ENCODE measurements at regions of chr9 and their contacts with region 1.

Region 1: GRCh38 chr9:111896353-111896958 is at the start of gene UGCG:
- DNase-seq: peak; percentile 69 to 75 (median 72)
- H3K4me3 ChIP-seq: peak within 1 kb of the TSS; percentile 58 to 90 (median 90)
- H3K4me3 Mint-ChIP-seq: peak within 1 kb of the TSS; percentile 92 to 96
- H3K27ac ChIP-seq: peak within 1 kb of the TSS; percentile 59 to 77
- H3K27ac Mint-ChIP-seq: peak within 1 kb of the TSS; percentile 35 to 85 (median 68)
- H3K4me1 ChIP-seq: peaks cover 22 to 29% of the 10 kb centered on the region in 2 donors
- H3K4me1 Mint-ChIP-seq: peaks cover 11% of the 10 kb centered on the region
- H3K27me3 ChIP-seq: peaks cover 0 to 10% of the 10 kb centered on the region in 2 donors
- H3K27me3 Mint-ChIP-seq: peaks cover 5 to 11% (median 10%) of the 10 kb centered on the region in 3 donors
- CTCF ChIP-seq: no peak
- polyA plus RNA-seq, gene UGCG: 2.7 to 7.9 (median 4.1) TPM

Region 2: GRCh38 chr9:111483862-111484571 is 412.4 kb before region 1 on chr9 and contains the start of gene ECPAS:
- intact Hi-C with region 1: loop called in 1 of 2 experiments (anchors 10 kb)
- DNase-seq: peak; percentile 67 to 81 (median 70)
- H3K4me3 ChIP-seq: peak within 1 kb of the TSS; percentile 86 to 92 (median 90)
- H3K4me3 Mint-ChIP-seq: peak within 1 kb of the TSS; percentile 83 to 92
- H3K27ac ChIP-seq: peak within 1 kb of the TSS; percentile 86 to 88
- H3K27ac Mint-ChIP-seq: peak within 1 kb of the TSS; percentile 82 to 94 (median 91)
- H3K4me1 ChIP-seq: peaks cover 22 to 26% of the 10 kb centered on the region in 2 donors
- H3K4me1 Mint-ChIP-seq: peaks cover 32% of the 10 kb centered on the region
- H3K27me3 ChIP-seq: no peaks in the 10 kb centered on the region
- H3K27me3 Mint-ChIP-seq: peaks cover 2 to 3% (median 3%) of the 10 kb centered on the region in 3 donors
- CTCF ChIP-seq: no peak
- polyA plus RNA-seq, gene ECPAS: 7.4 to 27.6 (median 15.9) TPM

Region 3: DNA sequence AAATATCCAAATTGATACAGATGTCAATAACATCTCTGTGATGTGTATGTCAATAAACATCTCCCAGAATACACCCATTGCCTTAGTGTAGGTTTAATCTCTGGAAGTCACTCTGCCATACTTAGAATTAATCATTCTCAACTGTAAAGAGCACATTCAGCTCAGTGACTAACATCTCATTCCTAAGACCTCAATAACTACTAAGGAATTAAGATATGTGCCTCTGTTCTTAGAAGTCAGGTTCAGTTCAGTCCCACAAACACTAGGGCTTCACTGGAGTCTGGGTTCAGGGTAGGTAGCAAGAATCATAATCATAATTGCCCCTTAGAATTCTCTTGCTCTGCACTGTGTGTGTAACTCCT is 31.9 kb after region 1 on chr9:
- intact Hi-C with region 1: no loop called
- DNase-seq: no peak
- H3K4me3 ChIP-seq: no peak overlapping the region
- H3K4me3 Mint-ChIP-seq: no peak overlapping the region
- H3K27ac ChIP-seq: no peak overlapping the region
- H3K27ac Mint-ChIP-seq: no peak overlapping the region
- H3K4me1 ChIP-seq: peaks cover 10 to 14% of the 10 kb centered on the region in 2 donors
- H3K4me1 Mint-ChIP-seq: peaks cover 17% of the 10 kb centered on the region
- H3K27me3 ChIP-seq: no peaks in the 10 kb centered on the region
- H3K27me3 Mint-ChIP-seq: no peaks in the 10 kb centered on the region
- CTCF ChIP-seq: no peak

Region 4: DNA sequence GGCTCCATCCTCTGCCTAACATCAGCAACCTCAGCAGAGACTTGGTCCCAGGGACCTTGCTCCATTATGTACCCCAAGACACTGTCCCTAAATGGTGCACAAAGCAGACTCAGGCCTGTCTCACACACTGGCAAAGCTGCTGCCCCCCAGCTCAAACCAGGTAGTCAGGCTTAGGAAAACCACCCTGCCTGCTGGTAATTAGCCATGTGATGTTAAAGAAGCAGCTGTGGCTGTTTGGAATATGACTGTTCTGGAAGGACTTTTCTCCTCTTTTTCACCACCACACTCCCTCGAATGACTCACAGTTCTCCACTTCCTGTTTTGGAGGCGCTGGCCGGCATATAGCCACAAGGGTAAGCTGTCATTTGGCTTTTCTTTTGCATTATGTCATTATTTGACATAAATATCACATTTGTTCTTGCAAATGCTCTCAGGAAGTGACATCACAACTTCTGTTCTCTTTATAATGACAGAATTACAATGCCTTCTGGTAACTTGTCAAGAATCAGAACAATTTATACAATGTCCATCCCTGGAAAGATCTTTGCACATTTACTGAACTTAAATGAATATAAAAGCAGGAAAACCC is 164.8 kb after region 1 on chr9:
- intact Hi-C with region 1: loop called in 1 of 2 experiments (anchors 10 kb)
- DNase-seq: peak; percentile 91 to 97 (median 93)
- H3K4me3 ChIP-seq: no peak overlapping the region
- H3K4me3 Mint-ChIP-seq: no peak overlapping the region
- H3K27ac ChIP-seq: peak overlapping the region; percentile 75 to 86
- H3K27ac Mint-ChIP-seq: peak overlapping the region; percentile 87 to 95 (median 91)
- H3K4me1 ChIP-seq: peaks cover 19 to 25% of the 10 kb centered on the region in 2 donors
- H3K4me1 Mint-ChIP-seq: peaks cover 49% of the 10 kb centered on the region
- H3K27me3 ChIP-seq: no peaks in the 10 kb centered on the region
- H3K27me3 Mint-ChIP-seq: peaks cover 0 to 2% (median 0%) of the 10 kb centered on the region in 3 donors
- CTCF ChIP-seq: no peak

Region 5: GRCh38 chr9:112074250-112075008 is 178.0 kb after region 1 on chr9:
- intact Hi-C with region 1: loop called (anchors 5 to 10 kb)
- DNase-seq: peak; percentile 20 to 53 (median 39)
- H3K4me3 ChIP-seq: no peak overlapping the region
- H3K4me3 Mint-ChIP-seq: no peak overlapping the region
- H3K27ac ChIP-seq: peak overlapping the region in 1 of 2 donors; percentile 22
- H3K27ac Mint-ChIP-seq: peak overlapping the region in 5 of 7 donors; percentile 8 to 63 (median 56)
- H3K4me1 ChIP-seq: peaks cover 10 to 15% of the 10 kb centered on the region in 2 donors
- H3K4me1 Mint-ChIP-seq: peaks cover 37% of the 10 kb centered on the region
- H3K27me3 ChIP-seq: no peaks in the 10 kb centered on the region
- H3K27me3 Mint-ChIP-seq: no peaks in the 10 kb centered on the region
- CTCF ChIP-seq: peak; percentile 87

Region 6: GRCh38 chr9:112333639-112334431 is 437.4 kb after region 1 on chr9:
- intact Hi-C with region 1: loop called in 1 of 2 experiments (anchors 5 kb)
- DNase-seq: peak; percentile 91 to 95 (median 94)
- H3K4me3 ChIP-seq: peak overlapping the region; percentile 69 to 96 (median 75)
- H3K4me3 Mint-ChIP-seq: peak overlapping the region; percentile 93 to 97
- H3K27ac ChIP-seq: peak overlapping the region; percentile 86 to 89
- H3K27ac Mint-ChIP-seq: peak overlapping the region; percentile 87 to 97 (median 95)
- H3K4me1 ChIP-seq: peaks cover 14 to 43% of the 10 kb centered on the region in 2 donors
- H3K4me1 Mint-ChIP-seq: peaks cover 29% of the 10 kb centered on the region
- H3K27me3 ChIP-seq: no peaks in the 10 kb centered on the region
- H3K27me3 Mint-ChIP-seq: peaks cover 0 to 5% (median 0%) of the 10 kb centered on the region in 3 donors
- CTCF ChIP-seq: peak; percentile 53

Measured in CD14-positive monocyte (primary cell).